ENCODE measurements at regions of chr14 and their contacts with region 1.

Region 1: DNA sequence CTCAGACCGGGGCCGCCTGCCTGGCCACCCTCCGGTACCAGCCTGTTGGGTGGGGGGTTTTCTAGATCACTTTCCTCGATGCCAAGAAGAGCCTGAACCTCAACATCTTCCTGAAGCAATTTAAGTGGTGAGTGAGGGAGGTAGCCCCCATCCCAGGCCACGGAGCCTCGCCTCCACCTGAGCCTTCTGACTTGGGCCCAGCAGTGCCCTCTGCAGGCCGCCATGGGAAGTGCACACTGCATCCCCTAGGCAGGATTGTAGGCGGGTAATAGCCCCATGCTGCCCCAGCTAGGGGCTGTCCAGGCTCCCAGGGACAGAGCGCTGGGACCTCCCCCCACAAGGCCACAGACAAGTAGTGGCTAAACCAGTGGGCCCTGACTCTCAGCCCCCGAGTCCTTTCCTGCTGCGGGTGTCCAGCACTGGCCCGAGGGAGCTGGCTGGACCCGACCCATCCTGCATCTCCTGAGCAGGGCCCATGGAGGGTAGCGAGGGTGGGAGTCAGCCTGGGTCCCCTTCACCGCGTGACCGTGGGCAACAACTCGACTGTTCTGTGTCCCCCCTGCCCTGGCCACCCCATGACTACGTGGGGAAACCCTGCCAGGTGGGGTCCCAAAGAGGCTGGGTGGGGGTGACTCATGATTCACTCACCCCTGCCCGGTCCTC is 15.3 kb upstream of the ADSS1 start:
- DNase-seq: peak; percentile 85
- ATAC-seq: peak; percentile 91
- H3K4me3 Mint-ChIP-seq: no peak overlapping the region
- H3K27ac Mint-ChIP-seq: no peak overlapping the region
- H3K4me1 Mint-ChIP-seq: peaks cover 2% of the 10 kb centered on the region
- H3K27me3 Mint-ChIP-seq: no peaks in the 10 kb centered on the region

Region 2: DNA sequence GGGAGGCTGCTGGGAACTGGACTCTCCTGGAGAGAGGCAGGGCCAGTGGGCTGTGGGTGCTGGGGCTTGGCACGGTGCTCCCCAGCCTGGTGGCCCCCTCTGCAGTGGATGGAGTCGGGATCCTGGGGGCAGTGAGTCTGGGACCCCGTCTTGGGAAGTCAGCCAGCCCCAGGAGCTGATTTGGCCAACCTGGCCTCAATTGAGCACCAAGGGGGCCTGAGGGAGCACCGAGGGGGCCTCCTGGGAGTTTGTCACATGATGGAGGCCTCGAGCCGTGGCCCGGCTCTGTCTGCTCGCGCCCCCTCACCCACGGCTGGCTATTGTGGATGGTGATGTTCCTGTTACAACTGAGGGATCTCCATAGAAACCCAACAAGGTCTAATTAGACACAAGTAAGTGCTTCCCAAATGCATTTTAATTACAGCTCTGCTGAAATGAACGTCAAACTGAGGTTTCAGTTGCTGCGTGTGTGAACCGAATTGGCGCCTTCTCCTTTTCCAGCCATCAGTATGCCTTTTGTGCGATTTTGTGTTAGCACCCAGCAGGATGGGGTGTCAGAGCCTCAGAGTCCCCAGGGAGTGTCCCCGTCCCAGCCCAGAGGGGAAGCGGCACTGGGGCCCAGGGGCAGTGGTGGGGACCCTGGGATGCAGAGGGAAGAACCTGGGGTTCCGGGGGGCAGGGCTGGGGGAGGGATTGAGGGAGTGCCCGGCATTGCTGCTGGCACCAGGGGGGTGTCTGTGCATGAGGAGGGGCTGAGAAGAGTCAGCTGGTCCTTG is 498.5 kb before region 1 on chr14:
- CTCF ChIA-PET with region 1: no interaction called
- POLR2A ChIA-PET with region 1: no interaction called
- intact Hi-C with region 1: no loop called
- DNase-seq: no peak
- ATAC-seq: no peak
- H3K4me3 Mint-ChIP-seq: no peak overlapping the region
- H3K27ac Mint-ChIP-seq: no peak overlapping the region
- H3K4me1 Mint-ChIP-seq: no peaks in the 10 kb centered on the region
- H3K27me3 Mint-ChIP-seq: peaks cover 2% of the 10 kb centered on the region

Region 3: GRCh38 chr14:104650057-104650981 is 58.4 kb before region 1 on chr14:
- CTCF ChIA-PET with region 1: interaction called, 4 read pairs
- POLR2A ChIA-PET with region 1: no interaction called
- intact Hi-C with region 1: loop called (anchors 1 kb)
- DNase-seq: peak; percentile 80
- ATAC-seq: peak; percentile 92
- H3K4me3 Mint-ChIP-seq: no peak overlapping the region
- H3K27ac Mint-ChIP-seq: no peak overlapping the region
- H3K4me1 Mint-ChIP-seq: no peaks in the 10 kb centered on the region
- H3K27me3 Mint-ChIP-seq: peaks cover 3% of the 10 kb centered on the region

Region 4: DNA sequence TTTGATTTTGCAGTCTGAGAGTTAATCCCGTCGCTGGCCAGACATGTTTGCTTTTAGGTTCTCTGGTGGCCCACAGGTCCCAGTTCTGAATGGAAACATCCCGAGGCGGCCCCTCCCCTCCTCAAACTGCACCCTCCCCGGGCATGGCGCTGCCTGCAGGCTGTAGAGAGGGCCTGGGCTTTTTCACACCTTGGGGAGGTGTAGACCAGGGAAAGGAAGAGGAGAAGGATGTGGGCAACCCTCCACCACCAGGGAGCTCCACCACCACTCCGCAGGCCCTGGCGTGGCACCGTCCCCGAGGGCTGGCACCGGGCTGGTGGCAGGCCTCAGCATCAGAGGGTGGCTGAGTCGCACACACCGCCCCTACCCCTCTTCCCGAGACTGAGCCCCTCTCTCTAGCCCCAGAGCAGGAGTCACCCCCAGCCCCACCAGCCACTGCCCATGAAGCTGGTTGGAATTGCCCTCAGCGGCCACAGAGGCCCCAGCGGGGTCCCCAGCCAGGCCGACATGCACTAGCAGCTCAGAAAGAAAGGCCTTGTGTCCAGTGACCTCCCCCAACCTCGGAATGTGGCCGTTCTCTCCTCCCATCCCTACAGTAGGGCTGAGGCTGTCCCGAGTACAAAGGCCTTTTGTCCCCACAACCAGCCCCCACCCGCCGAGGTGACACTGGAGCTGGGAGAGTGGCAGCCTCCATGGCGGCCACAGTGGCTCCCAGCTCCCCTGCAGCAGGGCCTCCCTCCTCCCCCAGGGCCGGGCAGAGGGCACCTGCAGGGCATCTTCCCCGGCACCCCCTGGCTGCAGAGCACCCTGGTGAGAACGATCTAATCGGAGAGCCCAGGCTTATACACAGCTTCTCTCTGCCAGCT is 42.8 kb before region 1 on chr14:
- CTCF ChIA-PET with region 1: no interaction called
- POLR2A ChIA-PET with region 1: no interaction called
- intact Hi-C with region 1: loop called (anchors 1 kb)
- DNase-seq: peak; percentile 71
- ATAC-seq: peak; percentile 93
- H3K4me3 Mint-ChIP-seq: no peak overlapping the region
- H3K27ac Mint-ChIP-seq: no peak overlapping the region
- H3K4me1 Mint-ChIP-seq: peaks cover 22% of the 10 kb centered on the region
- H3K27me3 Mint-ChIP-seq: peaks cover 5% of the 10 kb centered on the region